ENCODE measurements at regions of chr3 and their contacts with region 1.

Region 1: DNA sequence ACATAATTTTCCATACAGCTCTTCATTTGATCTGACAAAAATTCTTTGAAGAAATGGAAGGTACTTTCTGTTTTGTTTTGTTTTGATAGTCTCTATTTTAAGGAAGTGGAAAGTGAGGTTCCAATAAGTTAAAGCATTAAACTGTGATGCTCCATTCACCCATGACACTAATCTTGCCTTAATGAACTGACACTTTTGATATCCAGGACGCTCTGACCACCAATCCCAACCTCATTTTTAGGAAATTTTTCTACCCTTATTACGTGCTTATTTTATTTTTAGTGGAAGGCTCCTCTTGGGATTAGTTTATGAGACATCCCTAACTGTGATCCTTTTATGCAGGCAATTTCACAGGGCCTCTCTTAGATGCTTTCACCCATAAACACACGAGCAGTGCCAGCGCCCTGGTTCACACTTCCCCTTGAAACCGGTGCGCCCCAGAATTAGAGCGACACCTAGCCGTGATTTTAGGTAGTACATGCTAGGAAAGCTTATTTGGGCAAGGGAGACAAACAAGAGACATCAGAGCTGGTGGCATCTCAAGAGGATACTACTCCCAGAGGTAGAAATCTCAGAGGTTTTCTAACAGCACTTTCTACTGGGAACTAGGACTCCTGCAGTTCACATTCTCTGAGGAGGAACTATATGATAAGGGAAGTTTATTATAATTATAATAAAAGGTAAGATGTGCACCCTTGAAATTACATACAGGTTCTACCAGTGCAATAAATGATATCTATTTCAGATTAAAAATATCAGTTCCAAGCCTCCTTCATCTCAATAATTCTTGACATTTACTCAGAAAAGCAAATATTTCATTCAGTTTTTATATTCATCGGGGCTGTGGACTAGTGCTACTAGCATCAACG is 173.9 kb downstream of the SLC9A9 start:
- DNase-seq: peak; percentile 41 to 82
- H3K4me3 ChIP-seq: no peak overlapping the region
- H3K4me1 ChIP-seq: no peaks in the 10 kb centered on the region; the same call in 1 of the 2 replicates
- H3K27me3 ChIP-seq: peaks cover 3% of the 10 kb centered on the region; the same call in 1 of the 2 replicates

Region 2: DNA sequence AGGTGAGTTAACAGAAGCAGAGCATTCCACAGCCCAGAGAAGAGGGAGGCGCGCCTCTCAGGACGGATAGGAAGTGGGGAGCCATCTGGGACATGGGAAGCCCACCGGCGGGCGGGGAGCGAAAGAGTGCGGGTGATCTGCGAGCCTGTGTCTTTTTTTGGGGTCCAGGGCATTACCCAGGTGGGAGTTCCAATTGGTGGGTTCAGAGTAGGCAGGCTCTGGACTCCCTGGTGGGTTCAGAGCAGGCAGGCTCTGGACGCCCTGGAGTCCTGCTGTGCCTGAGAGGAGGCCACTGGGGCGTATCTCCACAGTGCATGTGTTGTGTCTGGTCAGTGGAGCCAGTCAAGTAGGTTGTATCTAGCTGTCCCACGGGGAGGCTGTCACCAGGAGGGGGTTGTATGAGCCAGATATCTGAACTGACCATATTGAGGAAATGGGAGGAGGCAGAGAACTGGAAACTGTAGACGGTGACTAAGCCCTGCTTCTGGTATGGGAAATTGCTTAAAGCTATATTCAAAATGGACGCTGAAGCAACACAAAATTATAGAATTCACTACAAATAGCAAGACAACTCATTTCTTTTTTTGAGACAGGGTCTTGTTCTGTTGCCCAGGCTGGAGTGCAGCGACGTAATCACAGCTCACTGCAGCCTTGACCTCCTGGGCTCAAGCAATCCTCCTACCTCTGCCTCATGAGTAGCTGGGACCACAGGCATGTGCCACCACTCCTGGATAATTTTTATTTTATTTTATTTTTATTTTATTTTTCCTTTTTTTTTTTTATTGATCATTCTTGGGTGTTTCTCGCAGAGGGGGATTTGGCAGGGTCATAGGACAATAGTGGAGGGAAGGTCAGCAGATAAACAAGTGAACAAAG is 589.2 kb before region 1 on chr3:
- in situ Hi-C with region 1: loop called (anchors 25 kb)
- DNase-seq: no peak
- H3K4me3 ChIP-seq: no peak overlapping the region
- H3K4me1 ChIP-seq: no peaks in the 10 kb centered on the region
- H3K27me3 ChIP-seq: no peaks in the 10 kb centered on the region

Region 3: GRCh38 chr3:143565951-143566350 is 108.4 kb before region 1 on chr3:
- in situ Hi-C with region 1: no loop called
- DNase-seq: no peak
- H3K4me3 ChIP-seq: no peak overlapping the region
- H3K4me1 ChIP-seq: no peaks in the 10 kb centered on the region; the same call in 1 of the 2 replicates
- H3K27me3 ChIP-seq: no peaks in the 10 kb centered on the region